ENCODE measurements at regions of chr9 and their contacts with region 1.

Region 1: DNA sequence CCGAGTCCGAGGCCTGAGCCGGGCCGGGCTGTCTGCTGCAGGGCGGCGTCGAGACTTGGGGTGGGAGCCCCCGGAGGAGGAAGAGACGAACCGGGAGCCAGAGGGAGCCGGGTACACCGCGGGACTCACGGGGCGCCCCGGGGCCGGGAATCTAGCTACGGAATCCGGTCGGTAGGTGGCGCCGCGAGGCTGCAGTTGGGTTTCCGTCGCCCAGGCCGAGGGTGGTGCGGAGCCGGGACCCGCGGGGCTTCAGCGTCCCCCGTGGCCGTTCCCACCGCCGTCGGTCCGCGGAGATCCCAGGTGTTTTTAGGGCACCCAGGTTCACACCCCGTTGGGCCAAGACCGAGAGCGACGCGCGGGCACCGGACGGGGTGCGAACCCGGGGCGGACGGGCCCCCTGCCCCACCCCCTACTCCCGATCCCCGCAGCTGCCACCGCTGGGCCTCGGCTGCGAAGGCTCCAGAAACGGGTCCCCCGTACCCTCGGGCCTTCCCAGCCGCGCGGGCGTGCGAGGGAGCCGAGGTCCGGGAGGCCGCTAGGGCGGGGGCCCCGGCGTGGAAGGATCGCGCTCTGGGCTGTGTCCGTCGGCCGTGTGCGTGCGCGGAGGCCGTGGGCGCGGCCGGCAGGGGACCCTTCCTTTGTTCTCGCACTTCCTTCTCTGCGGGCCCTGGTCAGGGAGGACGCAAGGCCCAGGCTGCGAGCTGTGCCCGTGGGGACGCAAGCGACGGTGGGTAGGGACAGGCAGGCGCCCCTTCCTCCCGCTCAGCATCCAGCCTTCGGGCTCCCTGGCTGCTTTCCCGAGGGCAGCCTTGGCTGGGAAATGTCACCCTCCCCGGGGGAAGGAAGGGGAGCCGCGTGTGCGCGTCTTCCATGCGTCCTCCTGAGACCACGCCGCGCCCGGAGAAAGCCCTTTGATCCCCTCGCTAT is 146.6 kb downstream of the GAPVD1 start:
- DNase-seq: peak; percentile 56 to 66 (median 63)
- H3K4me3 ChIP-seq: peak overlapping the region; percentile 35 to 78 (median 37)
- H3K4me3 Mint-ChIP-seq: peak overlapping the region; percentile 73 to 86
- H3K27ac ChIP-seq: no peak overlapping the region
- H3K27ac Mint-ChIP-seq: peak overlapping the region in 2 of 7 donors; percentile 69 to 76
- H3K4me1 ChIP-seq: peaks cover 8 to 15% of the 10 kb centered on the region in 2 donors
- H3K4me1 Mint-ChIP-seq: peaks cover 20% of the 10 kb centered on the region
- H3K27me3 ChIP-seq: peaks cover 0 to 17% of the 10 kb centered on the region in 2 donors
- H3K27me3 Mint-ChIP-seq: peaks cover 24 to 33% (median 30%) of the 10 kb centered on the region in 3 donors
- CTCF ChIP-seq: peak; percentile 97

Region 2: DNA sequence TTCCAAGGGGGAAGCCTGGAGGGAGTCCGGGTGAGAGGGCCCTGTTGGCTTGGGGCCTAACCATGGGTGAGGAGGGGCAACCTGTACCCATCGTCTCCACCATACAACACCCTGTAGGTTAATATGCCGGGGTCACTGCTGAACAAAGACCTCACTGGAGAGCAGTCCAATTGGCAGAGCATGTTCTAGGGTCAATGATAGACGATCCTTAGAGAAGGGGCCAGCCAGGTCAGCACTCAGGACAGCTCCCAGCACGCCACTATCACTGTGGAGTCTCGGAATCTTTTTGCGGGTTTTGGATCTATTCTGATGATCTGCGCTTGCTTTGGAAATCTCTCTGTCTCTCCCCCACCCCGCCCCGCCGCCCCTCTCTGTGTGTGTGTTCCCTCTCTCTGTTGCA is 700.0 kb after region 1 on chr9:
- intact Hi-C with region 1: loop called in 1 of 2 experiments (anchors 10 kb)
- DNase-seq: no peak
- H3K4me3 ChIP-seq: no peak overlapping the region
- H3K4me3 Mint-ChIP-seq: no peak overlapping the region
- H3K27ac ChIP-seq: no peak overlapping the region
- H3K27ac Mint-ChIP-seq: no peak overlapping the region
- H3K4me1 ChIP-seq: no peaks in the 10 kb centered on the region
- H3K4me1 Mint-ChIP-seq: no peaks in the 10 kb centered on the region
- H3K27me3 ChIP-seq: peaks cover 0 to 5% of the 10 kb centered on the region in 2 donors
- H3K27me3 Mint-ChIP-seq: peaks cover 10 to 17% (median 12%) of the 10 kb centered on the region in 3 donors
- CTCF ChIP-seq: no peak

Region 3: GRCh38 chr9:126228781-126229444 is 820.7 kb after region 1 on chr9:
- intact Hi-C with region 1: loop called (anchors 1 to 2 kb)
- DNase-seq: peak; percentile 27 to 45 (median 41)
- H3K4me3 ChIP-seq: no peak overlapping the region
- H3K4me3 Mint-ChIP-seq: no peak overlapping the region
- H3K27ac ChIP-seq: no peak overlapping the region
- H3K27ac Mint-ChIP-seq: no peak overlapping the region
- H3K4me1 ChIP-seq: no peaks in the 10 kb centered on the region
- H3K4me1 Mint-ChIP-seq: peaks cover 2% of the 10 kb centered on the region
- H3K27me3 ChIP-seq: peaks cover 0 to 11% of the 10 kb centered on the region in 2 donors
- H3K27me3 Mint-ChIP-seq: peaks cover 15 to 37% (median 22%) of the 10 kb centered on the region in 3 donors
- CTCF ChIP-seq: peak; percentile 87

Region 4: GRCh38 chr9:126398403-126399058 is 990.3 kb after region 1 on chr9:
- intact Hi-C with region 1: loop called in 1 of 2 experiments (anchors 5 kb)
- DNase-seq: peak; percentile 63 to 70 (median 69)
- H3K4me3 ChIP-seq: no peak overlapping the region
- H3K4me3 Mint-ChIP-seq: no peak overlapping the region
- H3K27ac ChIP-seq: no peak overlapping the region
- H3K27ac Mint-ChIP-seq: no peak overlapping the region
- H3K4me1 ChIP-seq: peaks cover 14 to 17% of the 10 kb centered on the region in 2 donors
- H3K4me1 Mint-ChIP-seq: peaks cover 42% of the 10 kb centered on the region
- H3K27me3 ChIP-seq: no peaks in the 10 kb centered on the region
- H3K27me3 Mint-ChIP-seq: no peaks in the 10 kb centered on the region
- CTCF ChIP-seq: peak; percentile 98